GM12878 (cell line): ENCODE measurements at regions of chr15 and their contacts with region 1.

Region 1: GRCh38 chr15:90994417-90995311 is at the start of gene PRC1:
- DNase-seq: peak; percentile 77
- ATAC-seq: peak; percentile 94
- H3K4me3 ChIP-seq: peak within 1 kb of the TSS; percentile 99
- H3K27ac ChIP-seq: peak within 1 kb of the TSS; percentile 96
- H3K4me1 ChIP-seq: peaks cover 3% of the 10 kb centered on the region; the same call in 1 of the 2 replicates
- H3K27me3 ChIP-seq: no peaks in the 10 kb centered on the region
- CTCF ChIP-seq: no peak
- EP300 ChIP-seq: no peak
- POLR2A ChIP-seq: peak; percentile 95
- RAD21 ChIP-seq: no peak
- polyA plus RNA-seq, gene PRC1: 100 to 130 TPM

Region 2: DNA sequence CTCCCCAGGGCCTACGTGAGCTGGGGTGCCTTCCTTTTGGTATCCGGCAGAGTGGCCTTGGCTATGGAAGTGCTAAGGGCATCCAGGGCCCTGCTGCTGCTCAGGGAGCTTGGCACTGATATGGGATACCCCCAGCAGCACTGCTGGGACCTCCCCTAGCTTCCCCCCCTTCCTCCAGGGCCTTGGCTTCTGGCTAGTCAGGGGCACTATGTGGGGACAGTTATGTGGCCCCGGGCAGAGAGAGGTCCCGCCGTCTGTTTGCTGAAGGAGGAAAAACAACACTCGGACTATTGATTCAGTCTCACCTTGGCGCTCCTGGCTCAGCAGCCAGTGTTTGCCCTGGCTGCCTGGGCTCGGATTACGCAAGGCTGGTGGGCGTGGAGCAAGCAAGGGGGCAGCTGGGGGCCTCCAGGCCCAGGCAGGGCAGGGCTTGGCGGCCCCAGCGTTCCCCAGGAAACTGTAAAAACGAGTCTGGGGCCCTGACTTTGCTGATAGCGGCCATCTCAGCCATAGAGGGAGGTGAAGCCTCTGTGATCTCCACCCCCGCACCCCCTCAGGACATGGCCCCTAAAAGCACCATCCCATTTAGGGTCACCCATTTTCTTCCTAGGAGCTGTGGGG is 120.6 kb before region 1 on chr15:
- CTCF ChIA-PET with region 1: no interaction called
- POLR2A ChIA-PET with region 1: no interaction called
- RAD21 ChIA-PET with region 1: no interaction called
- SMC1A ChIA-PET with region 1: no interaction called
- in situ Hi-C with region 1: no loop called
- intact Hi-C with region 1: no loop called
- DNase-seq: no peak
- ATAC-seq: no peak
- H3K4me3 ChIP-seq: peak overlapping the region; percentile 80; the same call in 1 of the 2 replicates
- H3K27ac ChIP-seq: peak overlapping the region; percentile 33; the same call in 1 of the 2 replicates
- H3K4me1 ChIP-seq: peaks cover 27% of the 10 kb centered on the region
- H3K27me3 ChIP-seq: no peaks in the 10 kb centered on the region
- CTCF ChIP-seq: no peak
- EP300 ChIP-seq: no peak
- POLR2A ChIP-seq: no peak
- RAD21 ChIP-seq: no peak

Region 3: GRCh38 chr15:91022075-91022835 is 27.6 kb after region 1 on chr15 and contains the start of gene VPS33B:
- CTCF ChIA-PET with region 1: interaction called, 5 read pairs
- POLR2A ChIA-PET with region 1: interaction called, 3 read pairs
- RAD21 ChIA-PET with region 1: interaction called, 3 read pairs
- SMC1A ChIA-PET with region 1: interaction called, 8 read pairs
- in situ Hi-C with region 1: no loop called
- intact Hi-C with region 1: loop called (anchors 1 kb)
- DNase-seq: peak; percentile 63
- ATAC-seq: peak; percentile 86
- H3K4me3 ChIP-seq: peak within 1 kb of the TSS; percentile 93
- H3K27ac ChIP-seq: peak within 1 kb of the TSS; percentile 88
- H3K4me1 ChIP-seq: peaks cover 3% of the 10 kb centered on the region; the same call in 1 of the 2 replicates
- H3K27me3 ChIP-seq: no peaks in the 10 kb centered on the region
- CTCF ChIP-seq: no peak
- EP300 ChIP-seq: no peak
- POLR2A ChIP-seq: peak; percentile 80
- RAD21 ChIP-seq: no peak
- polyA plus RNA-seq, gene VPS33B: 11.8 to 18.6 TPM